ENCODE measurements at regions of chr2 and their contacts with region 1.

Region 1: GRCh38 chr2:200617156-200618053 is 31.6 kb downstream of the AOX1 start:
- DNase-seq: no peak

Region 2: DNA sequence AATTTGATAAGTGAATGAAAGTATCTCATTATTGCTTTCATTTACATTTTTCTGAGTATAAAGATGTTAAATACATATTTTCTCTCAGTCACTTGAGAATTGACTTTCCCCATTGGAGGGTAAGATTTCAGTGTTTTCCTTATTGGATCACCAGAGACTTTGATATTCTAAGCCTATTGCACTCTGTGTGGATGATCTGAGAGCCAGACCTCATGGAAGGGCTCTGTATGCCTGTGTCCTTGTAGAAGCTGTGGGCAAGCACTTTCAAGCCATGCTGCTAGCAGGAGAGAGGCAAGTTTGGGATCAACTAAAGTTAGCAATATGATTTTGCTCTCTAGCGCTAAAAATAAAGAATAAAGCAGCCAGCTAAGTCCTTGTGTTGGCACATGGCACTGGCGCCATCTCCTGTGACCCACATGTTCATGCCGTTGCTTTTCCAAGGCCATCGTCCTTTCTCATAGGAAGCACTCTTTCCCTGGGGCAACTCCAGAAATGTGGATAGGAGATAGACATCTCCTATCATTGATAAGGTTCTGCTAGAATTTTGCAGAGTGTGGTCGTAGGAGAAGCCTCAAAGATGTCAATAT is 41.0 kb after region 1 on chr2:
- CTCF ChIA-PET with region 1: interaction called, 10 read pairs
- POLR2A ChIA-PET with region 1: no interaction called
- DNase-seq: no peak